ENCODE measurements at regions of chrX and their contacts with region 1.

Region 1: DNA sequence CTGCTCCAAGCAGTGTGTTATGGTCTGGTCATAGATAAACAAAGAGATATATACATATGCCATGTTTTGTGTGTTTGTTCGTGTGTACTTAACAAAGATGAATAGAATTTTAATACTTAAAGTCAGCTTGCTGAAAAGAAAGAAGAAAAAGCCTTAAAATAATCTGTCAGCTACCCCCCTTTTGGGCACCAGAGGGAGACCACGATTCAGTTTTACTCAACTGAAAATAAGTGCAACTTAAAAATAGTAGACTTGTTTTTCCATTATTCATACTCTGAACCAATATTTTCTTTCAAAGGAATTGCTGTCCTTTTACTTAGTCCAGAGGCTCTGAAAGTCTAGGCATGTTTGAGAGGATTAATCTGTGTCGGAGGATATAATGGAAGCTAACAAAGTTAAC is 181.7 kb upstream of the AGTR2 start:
- DNase-seq: peak; percentile 37
- ATAC-seq: no peak
- H3K4me3 ChIP-seq: no peak overlapping the region
- H3K27ac ChIP-seq: no peak overlapping the region
- H3K4me1 ChIP-seq: no peaks in the 10 kb centered on the region
- H3K27me3 ChIP-seq: no peaks in the 10 kb centered on the region
- CTCF ChIP-seq: peak; percentile 64

Region 2: GRCh38 chrX:116009346-116009745 is 20.5 kb after region 1 on chrX:
- CTCF ChIA-PET with region 1: no interaction called
- POLR2A ChIA-PET with region 1: no interaction called
- intact Hi-C with region 1: no loop called
- DNase-seq: no peak
- ATAC-seq: no peak
- H3K4me3 ChIP-seq: no peak overlapping the region
- H3K27ac ChIP-seq: no peak overlapping the region
- H3K4me1 ChIP-seq: no peaks in the 10 kb centered on the region
- H3K27me3 ChIP-seq: peaks cover 13% of the 10 kb centered on the region
- CTCF ChIP-seq: no peak

Region 3: DNA sequence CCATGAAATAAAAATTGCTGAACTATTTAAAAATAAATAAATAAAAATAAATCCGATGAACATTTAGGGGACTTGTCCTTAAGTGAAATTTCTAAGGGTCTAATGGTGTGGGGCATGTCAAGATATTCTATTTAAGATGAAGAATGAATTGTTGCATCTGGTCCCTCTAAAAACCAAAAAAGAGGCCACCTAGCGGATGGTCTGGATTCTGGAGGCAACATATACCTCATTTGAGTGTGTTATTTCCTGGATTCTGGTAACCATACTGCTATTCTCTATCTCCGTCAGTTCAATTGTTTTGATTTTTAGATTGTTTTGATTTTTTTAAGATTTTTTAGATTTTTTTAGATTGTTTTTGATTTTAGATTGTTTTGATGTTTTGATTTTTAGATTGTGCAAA is 210.0 kb after region 1 on chrX:
- CTCF ChIA-PET with region 1: no interaction called
- POLR2A ChIA-PET with region 1: no interaction called
- intact Hi-C with region 1: loop called (anchors 5 kb)
- DNase-seq: peak; percentile 30
- ATAC-seq: no peak
- H3K4me3 ChIP-seq: no peak overlapping the region
- H3K27ac ChIP-seq: no peak overlapping the region
- H3K4me1 ChIP-seq: peaks cover 13% of the 10 kb centered on the region
- H3K27me3 ChIP-seq: no peaks in the 10 kb centered on the region
- CTCF ChIP-seq: peak; percentile 54

Region 4: GRCh38 chrX:116436358-116436816 is 447.6 kb after region 1 on chrX and contains the start of gene SLC6A14:
- CTCF ChIA-PET with region 1: no interaction called
- POLR2A ChIA-PET with region 1: no interaction called
- intact Hi-C with region 1: no loop called
- DNase-seq: peak; percentile 2
- ATAC-seq: peak; percentile 74
- H3K4me3 ChIP-seq: no peak within 1 kb of the TSS
- H3K27ac ChIP-seq: no peak within 1 kb of the TSS
- H3K4me1 ChIP-seq: no peaks in the 10 kb centered on the region
- H3K27me3 ChIP-seq: no peaks in the 10 kb centered on the region
- CTCF ChIP-seq: no peak
- total RNA-seq, gene SLC6A14: 0.07 TPM in 1 of 2 replicates, not detected in the other

Measured in PC-3 (cell line).